ENCODE measurements at regions of chr9 and their contacts with region 1.

Region 1: DNA sequence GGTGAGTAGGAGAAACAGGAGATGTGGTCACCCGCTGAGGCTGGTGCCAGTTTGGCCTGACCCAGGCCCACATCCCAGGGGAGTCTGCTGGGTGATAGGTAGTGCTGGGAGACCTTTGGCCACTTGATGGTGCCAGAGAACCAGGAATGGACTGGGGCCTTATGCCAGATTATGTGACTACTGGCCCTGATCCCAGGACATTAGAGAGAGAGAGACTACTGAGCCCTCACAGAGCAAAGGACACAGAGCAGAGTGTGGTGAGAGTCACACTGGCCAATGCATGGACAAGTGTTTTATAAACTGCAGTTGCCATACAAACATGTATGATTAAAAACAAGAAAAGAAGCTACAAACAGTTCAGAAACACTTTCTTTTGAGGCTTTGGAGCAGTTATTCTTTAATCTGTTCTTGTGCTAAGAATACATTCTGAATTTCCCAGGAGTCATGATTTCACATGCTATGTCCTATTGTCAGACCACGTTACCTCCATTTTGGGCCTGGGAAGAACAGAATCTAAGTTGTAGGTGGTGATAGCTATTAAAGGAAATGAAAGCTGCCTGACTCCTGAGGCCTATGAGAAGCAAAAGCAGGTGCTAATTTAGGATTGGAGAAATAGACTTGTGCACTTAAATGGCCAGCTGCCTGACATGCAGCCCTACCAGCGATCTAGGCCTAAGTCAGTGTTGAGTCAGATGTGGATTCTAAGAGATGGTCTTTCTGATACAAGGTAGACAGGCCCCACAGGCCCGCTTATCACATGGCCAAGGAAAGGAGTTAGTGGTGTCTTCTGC is 32.6 kb upstream of the TMOD1 start:
- DNase-seq: peak; percentile 91
- H3K4me3 ChIP-seq: no peak overlapping the region
- H3K27ac ChIP-seq: peak overlapping the region; percentile 75 to 82
- H3K4me1 ChIP-seq: peaks cover 0 to 23% (median 13%) of the 10 kb centered on the region in 4 donors
- H3K27me3 ChIP-seq: no peaks in the 10 kb centered on the region
- CTCF ChIP-seq: peak; percentile 84 to 96

Region 2: GRCh38 chr9:97176206-97176605 is 292.6 kb before region 1 on chr9:
- intact Hi-C with region 1: no loop called
- DNase-seq: no peak
- H3K4me3 ChIP-seq: no peak overlapping the region
- H3K27ac ChIP-seq: no peak overlapping the region
- H3K4me1 ChIP-seq: no peaks in the 10 kb centered on the region
- H3K27me3 ChIP-seq: no peaks in the 10 kb centered on the region
- CTCF ChIP-seq: no peak

Region 3: GRCh38 chr9:97615439-97616072 is 146.7 kb after region 1 on chr9:
- intact Hi-C with region 1: loop called (anchors 5 kb)
- DNase-seq: peak in 1 of 2 donors; percentile 69
- H3K4me3 ChIP-seq: no peak overlapping the region
- H3K27ac ChIP-seq: peak overlapping the region in 1 of 2 donors; percentile 16
- H3K4me1 ChIP-seq: peaks cover 0 to 7% (median 1%) of the 10 kb centered on the region in 4 donors
- H3K27me3 ChIP-seq: no peaks in the 10 kb centered on the region
- CTCF ChIP-seq: peak; percentile 79 to 85

Region 4: GRCh38 chr9:97890038-97890437 is 421.2 kb after region 1 on chr9:
- intact Hi-C with region 1: loop called (anchors 10 kb)
- DNase-seq: no peak
- H3K4me3 ChIP-seq: no peak overlapping the region
- H3K27ac ChIP-seq: no peak overlapping the region
- H3K4me1 ChIP-seq: no peaks in the 10 kb centered on the region
- H3K27me3 ChIP-seq: no peaks in the 10 kb centered on the region
- CTCF ChIP-seq: peak in 1 of 2 experiments; percentile 12